ENCODE measurements at regions of chr6 and their contacts with region 1.

Region 1: DNA sequence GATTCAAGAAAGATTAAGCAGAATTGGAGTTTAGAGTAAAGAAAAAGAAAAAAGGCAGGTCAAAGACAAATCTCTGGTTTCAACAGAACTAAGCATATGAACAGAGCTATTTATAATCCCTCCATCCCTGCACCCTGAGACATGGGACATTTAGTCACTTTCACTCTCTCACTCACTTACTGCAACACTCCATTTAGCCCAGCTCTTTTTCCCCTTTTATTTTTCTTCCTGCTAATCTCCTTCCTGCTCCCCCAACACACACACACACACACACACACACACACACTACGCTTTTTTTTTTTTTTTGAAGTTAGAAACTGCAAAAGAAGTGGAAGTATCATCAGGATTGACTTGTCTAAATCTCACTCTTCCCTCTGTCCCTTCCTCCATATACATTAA is 45.1 kb upstream of the TBC1D7 start:
- DNase-seq: no peak
- H3K4me3 Mint-ChIP-seq: no peak overlapping the region
- H3K27ac Mint-ChIP-seq: no peak overlapping the region
- H3K4me1 Mint-ChIP-seq: peaks cover 16% of the 10 kb centered on the region
- H3K27me3 Mint-ChIP-seq: no peaks in the 10 kb centered on the region

Region 2: GRCh38 chr6:13383328-13384163 is 10.1 kb after region 1 on chr6:
- CTCF ChIA-PET with region 1: interaction called, 10 read pairs
- POLR2A ChIA-PET with region 1: no interaction called
- DNase-seq: no peak
- H3K4me3 Mint-ChIP-seq: no peak overlapping the region
- H3K27ac Mint-ChIP-seq: no peak overlapping the region
- H3K4me1 Mint-ChIP-seq: peaks cover 16% of the 10 kb centered on the region
- H3K27me3 Mint-ChIP-seq: no peaks in the 10 kb centered on the region